Ascending aorta (tissue), 2 donors: ENCODE measurements at regions of chr6 and their contacts with region 1.

Region 1: DNA sequence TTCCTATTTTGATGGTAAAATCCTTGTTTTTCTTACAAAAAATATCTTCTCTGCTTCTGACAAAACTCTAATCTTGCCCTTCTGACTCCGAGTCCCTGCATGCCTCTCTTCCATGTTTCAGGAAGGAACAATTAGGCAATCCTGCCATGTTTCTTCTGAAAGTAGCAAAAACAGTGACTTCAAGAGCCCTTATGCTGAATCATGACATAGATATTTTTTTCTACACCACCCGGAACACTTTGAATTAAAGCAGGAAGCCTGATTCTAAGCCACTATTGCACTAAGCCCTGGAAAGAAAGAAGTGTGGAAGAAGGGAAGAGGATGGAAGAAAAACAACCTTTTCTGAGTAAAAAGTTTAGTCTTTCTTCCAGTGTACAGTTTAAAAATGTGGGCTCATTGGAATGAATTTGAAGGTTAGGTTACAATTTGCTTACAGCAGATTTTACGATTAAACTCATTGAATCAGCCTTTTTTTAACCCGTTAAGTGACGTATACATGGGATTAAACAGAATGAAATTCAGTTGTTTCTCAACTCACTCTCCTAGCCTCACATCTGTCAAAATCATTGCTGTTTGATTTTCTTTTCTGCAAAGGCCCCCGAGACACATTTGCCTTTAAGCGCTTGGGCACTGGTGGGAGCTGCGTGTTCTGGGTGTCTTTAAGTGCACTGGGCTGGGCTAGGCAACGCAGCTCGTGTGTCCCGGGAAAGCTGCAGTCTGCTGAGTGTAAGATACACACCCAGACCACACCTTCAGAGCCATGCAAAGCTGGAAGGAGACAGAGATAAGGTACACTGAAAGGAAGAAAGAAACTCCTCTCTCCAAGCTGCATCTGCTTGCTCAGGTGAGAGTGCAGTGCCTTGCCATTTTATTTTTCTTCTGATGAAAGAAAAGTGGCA is 159.4 kb upstream of the CITED2 start:
- DNase-seq: no peak
- H3K4me3 ChIP-seq: peak overlapping the region in 1 of 2 donors; percentile 24
- H3K27ac ChIP-seq: peak overlapping the region; percentile 58 to 71
- H3K4me1 ChIP-seq: peaks cover 9 to 20% of the 10 kb centered on the region in 2 donors
- H3K27me3 ChIP-seq: no peaks in the 10 kb centered on the region
- CTCF ChIP-seq: no peak

Region 2: DNA sequence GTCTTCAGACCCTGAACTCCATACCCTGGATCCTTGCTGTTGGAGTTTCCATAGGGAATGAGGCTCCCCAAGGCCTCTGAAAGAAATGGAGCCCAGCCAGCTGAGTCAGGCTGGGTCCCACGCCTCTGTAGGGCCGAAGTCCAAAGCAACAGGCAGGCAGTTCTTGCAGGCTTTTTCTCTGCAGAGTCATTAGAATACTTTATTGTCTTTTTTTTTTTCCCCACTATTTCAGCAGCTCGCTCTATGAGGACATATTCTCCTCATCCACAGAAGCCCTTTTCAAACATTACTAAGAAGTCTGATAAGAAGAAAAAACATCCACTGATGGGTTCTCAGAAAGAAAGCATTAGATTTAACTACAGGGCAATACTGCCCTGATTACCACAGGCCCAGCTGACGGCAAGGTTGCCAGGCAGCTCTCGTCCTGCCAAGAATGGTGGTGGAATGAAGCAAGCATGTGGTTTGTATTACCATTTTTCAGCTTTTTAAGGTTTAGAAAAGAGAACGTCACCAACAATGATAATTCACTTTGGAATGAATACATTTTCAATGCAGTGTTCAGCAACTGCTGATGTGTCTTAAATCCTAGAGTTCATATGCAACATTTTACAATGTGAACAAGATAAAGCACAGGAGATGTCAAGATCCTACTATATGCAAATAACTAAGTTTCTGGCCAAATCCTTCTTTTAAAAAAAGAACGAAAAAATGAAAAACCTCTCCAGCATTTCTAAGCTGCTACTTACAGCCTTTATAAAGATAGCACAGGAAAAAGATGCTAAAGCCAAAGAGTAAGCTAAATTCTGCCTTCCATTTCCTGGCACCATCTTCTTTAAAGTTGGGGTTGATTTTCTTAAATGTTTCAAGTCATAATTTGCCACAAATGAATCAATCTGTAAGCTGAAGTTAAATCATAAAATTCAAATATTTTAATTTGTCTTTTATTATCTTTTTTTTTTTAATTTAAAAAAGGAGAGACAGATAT is 64.2 kb after region 1 on chr6:
- intact Hi-C with region 1: loop called (anchors 5 kb)
- DNase-seq: peak; percentile 53 to 94
- H3K4me3 ChIP-seq: no peak overlapping the region
- H3K27ac ChIP-seq: peak overlapping the region; percentile 75 to 89
- H3K4me1 ChIP-seq: peaks cover 7 to 41% of the 10 kb centered on the region in 2 donors
- H3K27me3 ChIP-seq: no peaks in the 10 kb centered on the region
- CTCF ChIP-seq: no peak

Region 3: GRCh38 chr6:139640448-139640847 is 106.6 kb after region 1 on chr6:
- intact Hi-C with region 1: no loop called
- DNase-seq: no peak
- H3K4me3 ChIP-seq: no peak overlapping the region
- H3K27ac ChIP-seq: no peak overlapping the region
- H3K4me1 ChIP-seq: no peaks in the 10 kb centered on the region
- H3K27me3 ChIP-seq: no peaks in the 10 kb centered on the region
- CTCF ChIP-seq: no peak